Heart left ventricle (tissue), 16 donors: ENCODE measurements at regions of chr2 and their contacts with region 1.

Region 1: DNA sequence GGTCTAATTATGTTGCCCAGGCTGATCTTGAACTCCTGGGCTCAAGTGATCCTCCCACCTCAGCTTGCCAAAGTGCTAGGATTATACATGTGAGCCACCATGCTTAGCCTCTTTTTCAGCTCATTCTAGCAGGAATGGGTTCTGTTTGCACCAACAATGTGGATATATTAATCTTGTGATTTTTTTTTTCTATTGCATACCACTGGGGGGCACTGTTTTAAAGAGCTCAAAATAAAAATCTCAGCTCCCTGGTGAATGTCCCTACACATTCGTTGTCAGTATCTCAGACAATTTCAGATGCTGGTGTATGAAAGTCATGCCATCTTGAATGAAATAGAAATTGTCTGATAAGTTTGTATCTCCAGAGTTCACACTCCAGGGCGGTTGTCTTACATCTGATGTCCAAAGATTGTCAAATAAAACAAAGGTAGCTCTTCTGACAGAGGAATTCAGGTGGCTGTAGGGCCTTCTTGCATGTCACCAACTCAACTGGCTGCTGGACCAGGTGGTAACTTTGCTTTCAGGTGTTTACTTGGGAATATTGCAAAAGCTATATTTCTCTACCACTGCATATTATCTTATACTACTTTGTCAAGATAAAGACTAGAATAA is 3.1 kb upstream of the MATN3 start:
- DNase-seq: no peak
- ATAC-seq: peak in 3 of 4 donors; percentile 40 to 56 (median 55)
- H3K4me3 ChIP-seq: no peak overlapping the region
- H3K27ac ChIP-seq: no peak overlapping the region
- H3K4me1 ChIP-seq: peaks cover 0 to 16% (median 9%) of the 10 kb centered on the region in 12 donors
- H3K27me3 ChIP-seq: peaks cover 0 to 34% (median 3%) of the 10 kb centered on the region in 9 donors
- CTCF ChIP-seq: peak; percentile 44 to 72 (median 67)
- POLR2A ChIP-seq: no peak

Region 2: GRCh38 chr2:19568809-19569791 is 446.5 kb before region 1 on chr2:
- intact Hi-C with region 1: no loop called
- DNase-seq: no peak
- ATAC-seq: no peak
- H3K4me3 ChIP-seq: no peak overlapping the region
- H3K27ac ChIP-seq: no peak overlapping the region
- H3K4me1 ChIP-seq: peaks cover 0 to 4% (median under 1%) of the 10 kb centered on the region in 12 donors
- H3K27me3 ChIP-seq: no peaks in the 10 kb centered on the region
- CTCF ChIP-seq: no peak
- POLR2A ChIP-seq: no peak

Region 3: GRCh38 chr2:19764998-19765397 is 250.6 kb before region 1 on chr2:
- intact Hi-C with region 1: no loop called
- DNase-seq: no peak
- ATAC-seq: no peak
- H3K4me3 ChIP-seq: no peak overlapping the region
- H3K27ac ChIP-seq: no peak overlapping the region
- H3K4me1 ChIP-seq: no peaks in the 10 kb centered on the region
- H3K27me3 ChIP-seq: no peaks in the 10 kb centered on the region
- CTCF ChIP-seq: no peak
- POLR2A ChIP-seq: no peak

Region 4: DNA sequence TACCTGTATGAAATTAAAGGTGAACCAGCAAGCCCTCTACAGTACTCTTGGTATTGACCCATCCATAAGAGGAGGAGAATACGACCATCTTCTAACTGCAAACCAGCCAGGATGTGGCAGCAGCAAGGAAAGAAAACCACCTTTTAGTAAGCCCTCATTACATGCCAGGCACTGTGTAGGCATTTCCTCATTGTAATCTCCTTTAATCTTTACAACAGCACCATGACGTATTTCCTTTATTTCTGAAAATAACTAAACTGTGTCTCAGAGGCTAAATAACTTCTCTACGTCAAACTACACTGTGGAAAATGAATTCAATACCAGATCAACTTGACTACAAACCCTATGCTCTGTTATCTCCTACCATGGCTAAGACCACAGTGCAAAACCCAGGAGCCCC is 43.9 kb before region 1 on chr2:
- intact Hi-C with region 1: loop called in 1 of 10 experiments (anchors 5 kb)
- DNase-seq: no peak
- ATAC-seq: no peak
- H3K4me3 ChIP-seq: no peak overlapping the region
- H3K27ac ChIP-seq: no peak overlapping the region
- H3K4me1 ChIP-seq: no peaks in the 10 kb centered on the region
- H3K27me3 ChIP-seq: no peaks in the 10 kb centered on the region
- CTCF ChIP-seq: no peak
- POLR2A ChIP-seq: no peak

Region 5: DNA sequence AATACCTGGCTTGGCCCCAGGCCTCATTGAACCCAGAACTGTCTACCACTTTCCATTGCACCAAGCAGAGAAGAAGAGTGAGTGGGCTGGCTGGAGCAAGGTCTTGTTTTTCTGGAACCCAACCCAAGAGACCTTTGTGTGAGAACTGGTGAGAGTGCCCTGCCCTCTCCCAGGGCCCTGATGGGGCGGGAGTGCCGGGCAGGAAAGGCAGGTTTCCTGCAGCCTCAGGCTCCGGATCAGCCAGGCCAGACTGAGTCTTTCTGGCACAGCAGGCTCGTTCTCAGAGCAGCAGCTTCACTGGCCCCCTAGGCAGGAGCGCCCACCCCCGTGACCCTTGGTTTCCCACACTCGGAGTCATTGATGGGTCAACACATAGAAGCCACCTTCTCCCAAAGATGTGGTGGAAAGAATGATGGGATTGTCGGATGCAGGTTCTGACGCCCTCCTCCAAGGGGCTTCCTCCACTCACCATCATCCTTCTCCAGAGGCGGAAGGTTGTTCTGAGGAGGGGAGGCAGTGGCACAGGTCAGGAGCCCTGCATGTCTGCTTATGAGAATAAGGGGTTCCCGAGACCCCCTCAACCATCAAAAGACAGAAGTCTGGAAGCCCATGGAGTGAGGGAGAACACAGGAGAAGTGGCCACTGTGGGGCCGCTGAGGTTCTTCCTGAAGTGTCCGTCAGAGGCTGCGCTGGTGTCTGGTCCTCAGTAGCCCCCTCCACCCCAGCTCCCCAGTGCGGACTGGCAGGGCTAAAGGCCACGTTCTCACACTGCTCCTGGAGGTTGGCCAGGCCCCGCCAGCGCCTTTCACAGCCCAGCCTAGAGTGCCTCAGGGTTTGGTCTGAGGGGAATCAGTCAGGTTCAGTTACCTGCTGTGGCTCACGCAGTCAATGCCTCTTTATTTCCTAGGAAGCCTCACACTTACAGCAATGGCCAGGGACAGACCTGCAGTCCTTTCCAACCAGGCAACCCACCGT is 98.7 kb after region 1 on chr2:
- intact Hi-C with region 1: no loop called
- DNase-seq: no peak
- ATAC-seq: peak in 2 of 4 donors; percentile 54 to 71
- H3K4me3 ChIP-seq: no peak overlapping the region
- H3K27ac ChIP-seq: peak overlapping the region in 2 of 12 donors; percentile 3 to 46
- H3K4me1 ChIP-seq: peaks cover 0 to 14% (median 5%) of the 10 kb centered on the region in 12 donors
- H3K27me3 ChIP-seq: no peaks in the 10 kb centered on the region
- CTCF ChIP-seq: no peak
- POLR2A ChIP-seq: no peak